HEK293 (cell line): ENCODE measurements at regions of chr6 and their contacts with region 1.

Region 1: GRCh38 chr6:160733050-160733646 is 31.1 kb downstream of the PLG start:
- H3K4me3 ChIP-seq: no peak overlapping the region
- H3K27ac ChIP-seq: no peak overlapping the region
- H3K4me1 ChIP-seq: no peaks in the 10 kb centered on the region
- CTCF ChIP-seq: no peak

Region 2: GRCh38 chr6:160714731-160715316 is 18.3 kb before region 1 on chr6:
- CTCF ChIA-PET with region 1: interaction called, 11 read pairs
- POLR2A ChIA-PET with region 1: no interaction called
- H3K4me3 ChIP-seq: no peak overlapping the region
- H3K27ac ChIP-seq: no peak overlapping the region
- H3K4me1 ChIP-seq: no peaks in the 10 kb centered on the region
- CTCF ChIP-seq: no peak

Region 3: GRCh38 chr6:160750276-160750689 is 17.1 kb after region 1 on chr6:
- CTCF ChIA-PET with region 1: interaction called, 26 read pairs
- POLR2A ChIA-PET with region 1: no interaction called
- H3K4me3 ChIP-seq: no peak overlapping the region
- H3K27ac ChIP-seq: no peak overlapping the region
- H3K4me1 ChIP-seq: no peaks in the 10 kb centered on the region
- CTCF ChIP-seq: peak; percentile 69